ENCODE measurements at regions of chr11 and their contacts with region 1.

Region 1: DNA sequence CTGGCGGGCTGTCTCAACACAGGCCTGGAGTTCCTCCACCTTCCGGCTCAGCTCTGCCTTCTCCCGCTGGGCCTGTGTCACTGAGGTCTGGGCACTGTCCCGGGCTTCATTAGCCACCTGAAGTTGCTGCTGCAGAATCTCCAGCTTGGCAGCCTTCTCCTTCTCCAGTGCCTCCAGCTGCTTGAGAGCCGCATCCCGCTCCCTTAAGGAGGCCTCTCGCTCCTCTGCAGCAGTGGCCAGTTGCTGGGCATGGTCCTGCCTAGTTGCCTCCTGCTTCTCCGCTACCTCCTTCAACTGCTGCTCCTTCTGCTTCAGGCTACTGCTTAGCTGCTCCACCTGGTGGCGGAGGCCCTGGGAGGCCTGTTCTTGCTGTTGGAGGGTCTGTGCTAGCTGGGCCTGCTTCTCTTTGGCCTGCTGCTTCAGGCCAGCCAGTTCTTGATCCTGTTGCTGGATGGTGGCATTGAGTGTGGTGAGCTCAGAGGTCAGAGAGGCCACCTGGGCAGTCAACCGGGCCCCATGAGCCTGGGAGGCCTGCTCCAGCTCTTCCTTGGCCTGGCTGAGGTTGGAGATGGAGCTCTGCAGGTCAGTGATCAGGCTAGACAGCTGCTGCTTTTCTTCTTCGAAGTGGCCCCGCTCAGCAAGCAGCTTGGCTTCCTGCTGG is 16.9 kb downstream of the IL18BP start:
- DNase-seq: peak in 2 of 7 donors; percentile 14 to 55
- H3K4me3 ChIP-seq: no peak overlapping the region
- H3K27ac ChIP-seq: no peak overlapping the region
- H3K4me1 ChIP-seq: peaks cover 21% of the 10 kb centered on the region in 2 donors
- H3K27me3 ChIP-seq: no peaks in the 10 kb centered on the region
- CTCF ChIP-seq: peak in 1 of 6 experiments; percentile 31
- POLR2A ChIP-seq: no peak

Region 2: DNA sequence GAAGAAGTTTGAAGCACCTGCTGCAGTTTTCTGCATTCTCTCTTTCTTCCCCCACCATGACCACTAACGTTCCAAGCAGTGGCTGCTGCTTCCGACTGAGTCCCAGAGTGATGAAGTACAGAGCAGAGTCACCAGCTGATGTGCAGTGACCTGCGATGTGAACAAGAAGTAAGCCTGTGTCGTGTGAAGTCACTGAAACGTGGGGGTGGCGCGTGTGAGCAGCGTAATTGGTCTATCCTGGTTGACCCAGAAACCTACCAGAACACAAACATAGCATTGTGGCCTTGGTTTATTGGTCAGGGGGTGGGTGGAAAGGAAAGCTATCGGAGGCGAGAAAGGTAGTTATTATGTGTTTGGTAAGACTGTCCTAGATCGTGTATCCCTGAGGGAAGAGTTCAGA is 485.0 kb before region 1 on chr11:
- intact Hi-C with region 1: no loop called
- DNase-seq: no peak
- H3K4me3 ChIP-seq: no peak overlapping the region
- H3K27ac ChIP-seq: no peak overlapping the region
- H3K4me1 ChIP-seq: no peaks in the 10 kb centered on the region
- H3K27me3 ChIP-seq: no peaks in the 10 kb centered on the region
- CTCF ChIP-seq: no peak
- POLR2A ChIP-seq: no peak

Region 3: GRCh38 chr11:72119198-72119597 is 103.6 kb after region 1 on chr11:
- intact Hi-C with region 1: no loop called
- DNase-seq: peak in 1 of 7 donors; percentile 24
- H3K4me3 ChIP-seq: no peak overlapping the region
- H3K27ac ChIP-seq: peak overlapping the region in 2 of 5 donors; percentile 14 to 34
- H3K4me1 ChIP-seq: peaks cover 7 to 9% of the 10 kb centered on the region in 2 donors
- H3K27me3 ChIP-seq: no peaks in the 10 kb centered on the region
- CTCF ChIP-seq: no peak
- POLR2A ChIP-seq: no peak

Region 4: GRCh38 chr11:72238040-72238450 is 222.4 kb after region 1 on chr11:
- intact Hi-C with region 1: loop called in 1 of 2 experiments (anchors 10 kb)
- DNase-seq: peak; percentile 66 to 88 (median 72)
- H3K4me3 ChIP-seq: no peak overlapping the region
- H3K27ac ChIP-seq: peak overlapping the region in 2 of 5 donors; percentile 10 to 67
- H3K4me1 ChIP-seq: peaks cover 21 to 24% of the 10 kb centered on the region in 2 donors
- H3K27me3 ChIP-seq: peaks cover 6% of the 10 kb centered on the region
- CTCF ChIP-seq: peak; percentile 26 to 78 (median 59)
- POLR2A ChIP-seq: no peak